BJ (cell line): ENCODE measurements at regions of chr1 and their contacts with region 1.

Region 1: GRCh38 chr1:64823691-64824476 is 79.0 kb downstream of the RAVER2 start:
- DNase-seq: peak; percentile 19
- H3K4me3 ChIP-seq: no peak overlapping the region
- H3K27me3 ChIP-seq: no peaks in the 10 kb centered on the region
- CTCF ChIP-seq: peak; percentile 70

Region 2: GRCh38 chr1:64268653-64269557 is 555.0 kb before region 1 on chr1:
- CTCF ChIA-PET with region 1: interaction called, 33 read pairs
- POLR2A ChIA-PET with region 1: no interaction called
- DNase-seq: peak; percentile 33
- H3K4me3 ChIP-seq: no peak overlapping the region
- H3K27me3 ChIP-seq: no peaks in the 10 kb centered on the region; the same call in 1 of the 2 replicates
- CTCF ChIP-seq: peak; percentile 75

Region 3: GRCh38 chr1:64687725-64688327 is 136.1 kb before region 1 on chr1:
- CTCF ChIA-PET with region 1: interaction called, 11 read pairs
- POLR2A ChIA-PET with region 1: no interaction called
- DNase-seq: no peak
- H3K4me3 ChIP-seq: no peak overlapping the region
- H3K27me3 ChIP-seq: no peaks in the 10 kb centered on the region
- CTCF ChIP-seq: no peak